Activated CD4-positive, alpha-beta memory T cell treated with anti-CD3 and anti-CD28 coated beads for 36 hours (primary cell): ENCODE measurements at regions of chr1 and their contacts with region 1.

Region 1: GRCh38 chr1:109112652-109113285 is 1.1 kb upstream of the ELAPOR1 start:
- DNase-seq: peak; percentile 93
- H3K4me3 Mint-ChIP-seq: peak overlapping the region; percentile 80
- H3K27ac Mint-ChIP-seq: no peak overlapping the region
- H3K4me1 Mint-ChIP-seq: peaks cover 37% of the 10 kb centered on the region
- H3K27me3 Mint-ChIP-seq: no peaks in the 10 kb centered on the region

Region 2: GRCh38 chr1:108746372-108747205 is 366.2 kb before region 1 on chr1 and contains the start of gene STXBP3:
- CTCF ChIA-PET with region 1: no interaction called
- POLR2A ChIA-PET with region 1: no interaction called
- intact Hi-C with region 1: loop called (anchors 2 kb)
- DNase-seq: peak; percentile 100
- H3K4me3 Mint-ChIP-seq: peak within 1 kb of the TSS; percentile 95
- H3K27ac Mint-ChIP-seq: peak within 1 kb of the TSS; percentile 97
- H3K4me1 Mint-ChIP-seq: peaks cover 28% of the 10 kb centered on the region
- H3K27me3 Mint-ChIP-seq: no peaks in the 10 kb centered on the region
- total RNA-seq, gene STXBP3: 40.8 to 46.8 TPM

Region 3: DNA sequence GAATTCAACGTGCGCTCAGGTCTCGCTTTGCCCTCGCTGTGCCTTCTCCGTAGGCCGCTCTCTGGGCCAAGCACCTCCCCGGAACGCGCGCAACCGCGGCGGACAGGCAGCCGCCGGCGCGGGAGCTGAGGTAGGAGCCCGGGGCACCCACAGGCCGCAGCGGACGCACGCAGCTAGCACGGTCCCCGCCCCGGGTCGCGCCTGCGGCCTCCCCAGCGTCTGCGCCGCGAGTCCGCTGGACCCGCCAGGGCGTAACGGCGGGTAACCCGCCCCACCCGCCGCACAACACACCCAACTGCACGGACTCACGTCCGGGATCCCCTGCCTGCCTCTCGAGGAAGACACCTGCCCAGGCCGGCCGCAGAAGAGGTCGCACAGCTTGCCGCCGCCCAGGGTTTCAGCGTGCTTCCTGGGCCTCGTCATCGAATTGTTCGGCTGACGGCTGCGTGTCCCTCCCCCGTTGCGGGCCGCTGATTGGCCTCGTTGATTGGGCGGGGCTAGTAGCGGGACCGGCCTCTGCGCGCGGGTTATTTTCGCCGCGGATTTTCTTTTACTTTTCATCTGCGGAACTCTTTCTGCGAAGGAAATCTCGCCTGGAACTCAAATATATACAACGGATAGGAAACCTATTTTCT is 149.6 kb before region 1 on chr1 and contains the start of gene CLCC1:
- CTCF ChIA-PET with region 1: interaction called, 4 read pairs
- POLR2A ChIA-PET with region 1: interaction called, 5 read pairs
- intact Hi-C with region 1: loop called (anchors 2 kb)
- DNase-seq: peak; percentile 96
- H3K4me3 Mint-ChIP-seq: peak within 1 kb of the TSS; percentile 82
- H3K27ac Mint-ChIP-seq: peak within 1 kb of the TSS; percentile 87
- H3K4me1 Mint-ChIP-seq: peaks cover 28% of the 10 kb centered on the region
- H3K27me3 Mint-ChIP-seq: peaks cover 2% of the 10 kb centered on the region
- total RNA-seq, gene CLCC1: 17.1 to 18.6 TPM

Region 4: DNA sequence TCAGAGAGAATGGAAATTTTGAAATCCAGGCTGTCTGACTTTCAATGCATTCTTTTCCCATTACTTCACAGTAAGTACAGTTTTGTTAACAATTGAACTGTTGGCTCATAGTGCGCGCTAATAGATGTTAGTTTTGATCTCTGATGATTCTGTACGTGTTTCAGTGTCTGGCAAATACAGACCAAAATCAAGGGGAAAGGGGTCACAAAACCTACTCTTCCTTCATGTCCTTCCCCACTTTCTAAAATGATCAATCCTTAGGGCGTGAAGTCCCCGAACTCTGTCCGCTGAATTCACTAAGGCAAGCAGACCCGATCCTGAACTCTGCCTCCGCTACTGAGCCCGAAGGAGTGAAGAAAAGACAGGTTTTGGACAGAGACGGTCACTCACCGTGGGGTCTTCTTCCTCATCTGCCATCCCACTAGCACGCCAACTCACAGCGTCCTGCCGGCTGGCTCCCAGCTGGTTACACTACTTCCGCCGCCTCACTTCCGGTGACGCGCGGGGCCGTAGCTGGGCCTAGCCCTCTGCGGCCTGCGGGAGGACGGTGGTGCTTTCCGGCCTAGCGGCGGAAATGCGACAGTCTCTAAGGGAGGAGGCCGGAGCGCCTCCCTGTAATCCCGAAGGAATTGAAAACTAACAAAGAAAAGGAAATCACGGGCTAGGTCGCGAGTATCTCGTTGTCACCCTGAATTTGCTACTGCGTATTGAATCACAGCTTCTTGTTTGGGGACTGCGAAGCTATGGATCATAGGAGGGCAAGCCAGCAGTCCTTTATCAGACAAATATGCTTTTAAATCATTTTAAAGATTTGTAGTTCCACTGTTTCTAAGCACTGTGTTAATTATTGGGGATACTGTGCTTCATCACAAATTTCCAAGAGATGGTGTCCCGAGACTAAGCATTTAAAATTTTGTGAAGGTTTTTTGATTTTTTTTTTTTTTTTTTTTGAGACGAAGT is 37.0 kb before region 1 on chr1 and contains the start of gene TAF13:
- CTCF ChIA-PET with region 1: interaction called, 5 read pairs
- POLR2A ChIA-PET with region 1: interaction called, 3 read pairs
- intact Hi-C with region 1: loop called (anchors 1 kb)
- DNase-seq: peak; percentile 94
- H3K4me3 Mint-ChIP-seq: peak within 1 kb of the TSS; percentile 99
- H3K27ac Mint-ChIP-seq: peak within 1 kb of the TSS; percentile 95
- H3K4me1 Mint-ChIP-seq: peaks cover 17% of the 10 kb centered on the region
- H3K27me3 Mint-ChIP-seq: no peaks in the 10 kb centered on the region
- total RNA-seq, gene TAF13: 28.4 to 29.0 TPM

Region 5: GRCh38 chr1:109099938-109100773 is 12.6 kb before region 1 on chr1:
- CTCF ChIA-PET with region 1: interaction called, 80 read pairs
- POLR2A ChIA-PET with region 1: interaction called, 35 read pairs
- intact Hi-C with region 1: loop called (anchors 1 kb)
- DNase-seq: peak; percentile 98
- H3K4me3 Mint-ChIP-seq: peak overlapping the region; percentile 98
- H3K27ac Mint-ChIP-seq: peak overlapping the region; percentile 99
- H3K4me1 Mint-ChIP-seq: peaks cover 14% of the 10 kb centered on the region
- H3K27me3 Mint-ChIP-seq: peaks cover 3% of the 10 kb centered on the region

Region 6: DNA sequence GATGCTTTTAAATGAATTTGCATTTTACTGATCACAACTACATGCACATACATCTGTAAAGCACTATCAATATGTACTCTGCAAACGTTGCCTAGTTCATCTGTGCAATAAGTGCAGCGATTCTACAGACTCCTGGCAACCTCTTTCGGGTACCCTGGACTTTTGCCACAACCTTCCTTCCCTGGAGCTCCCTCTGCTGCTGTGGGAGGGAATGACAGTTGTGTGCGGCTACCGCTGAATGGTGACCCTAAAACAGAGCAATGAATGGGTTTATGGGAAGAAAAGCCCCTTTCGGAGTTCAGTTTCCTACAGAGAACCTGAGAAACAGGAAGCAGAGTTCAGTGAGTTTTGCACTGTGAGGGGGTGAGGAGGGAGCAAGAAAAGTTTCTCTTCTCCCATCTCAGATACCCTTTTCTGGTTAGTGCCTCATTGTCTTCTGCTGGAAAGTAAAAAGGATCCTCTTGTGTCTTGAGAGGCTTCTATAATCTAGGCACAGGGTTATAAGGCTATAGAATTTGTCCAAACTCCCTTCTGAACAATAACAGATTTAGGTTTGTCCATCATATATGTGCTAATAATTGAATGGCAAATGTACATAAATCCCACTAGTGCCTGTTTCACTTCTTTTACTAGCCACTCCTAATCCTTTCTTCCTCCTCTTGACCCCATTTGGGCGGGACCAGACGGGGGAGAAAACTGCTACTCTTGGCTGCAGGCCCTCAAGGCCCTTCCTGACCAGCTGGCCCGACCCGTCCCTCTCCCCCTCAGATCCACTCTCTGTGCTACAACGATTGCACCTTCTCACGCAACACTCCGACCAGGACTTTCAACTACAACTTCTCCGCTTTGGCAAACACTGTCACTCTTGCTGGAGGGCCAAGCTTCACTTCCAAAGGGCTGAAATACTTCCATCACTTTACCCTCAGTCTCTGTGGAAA is 81.2 kb after region 1 on chr1:
- CTCF ChIA-PET with region 1: interaction called, 16 read pairs
- POLR2A ChIA-PET with region 1: no interaction called
- intact Hi-C with region 1: loop called (anchors 2 kb)
- DNase-seq: peak; percentile 73
- H3K4me3 Mint-ChIP-seq: no peak overlapping the region
- H3K27ac Mint-ChIP-seq: no peak overlapping the region
- H3K4me1 Mint-ChIP-seq: peaks cover 6% of the 10 kb centered on the region
- H3K27me3 Mint-ChIP-seq: no peaks in the 10 kb centered on the region